Activated T-helper 2 cell treated with anti-CD3 and anti-CD28 coated beads, Interferon-gamma antibody, Interleukin-2, Interleukin-4, amounts not matched to agents 10 μg/mL and 5 μg/mL and 100 μg/mL, durations not matched to agents 14 hours and 24 hours and 36 hours (primary cell): ENCODE measurements at regions of chr14 and their contacts with region 1.

Region 1: GRCh38 chr14:21014761-21015190 is 10.1 kb downstream of the NDRG2 start:
- DNase-seq: peak; percentile 53
- H3K4me3 Mint-ChIP-seq: no peak overlapping the region
- H3K27ac Mint-ChIP-seq: no peak overlapping the region
- H3K4me1 Mint-ChIP-seq: no peaks in the 10 kb centered on the region
- H3K27me3 Mint-ChIP-seq: peaks cover 15% of the 10 kb centered on the region

Region 2: DNA sequence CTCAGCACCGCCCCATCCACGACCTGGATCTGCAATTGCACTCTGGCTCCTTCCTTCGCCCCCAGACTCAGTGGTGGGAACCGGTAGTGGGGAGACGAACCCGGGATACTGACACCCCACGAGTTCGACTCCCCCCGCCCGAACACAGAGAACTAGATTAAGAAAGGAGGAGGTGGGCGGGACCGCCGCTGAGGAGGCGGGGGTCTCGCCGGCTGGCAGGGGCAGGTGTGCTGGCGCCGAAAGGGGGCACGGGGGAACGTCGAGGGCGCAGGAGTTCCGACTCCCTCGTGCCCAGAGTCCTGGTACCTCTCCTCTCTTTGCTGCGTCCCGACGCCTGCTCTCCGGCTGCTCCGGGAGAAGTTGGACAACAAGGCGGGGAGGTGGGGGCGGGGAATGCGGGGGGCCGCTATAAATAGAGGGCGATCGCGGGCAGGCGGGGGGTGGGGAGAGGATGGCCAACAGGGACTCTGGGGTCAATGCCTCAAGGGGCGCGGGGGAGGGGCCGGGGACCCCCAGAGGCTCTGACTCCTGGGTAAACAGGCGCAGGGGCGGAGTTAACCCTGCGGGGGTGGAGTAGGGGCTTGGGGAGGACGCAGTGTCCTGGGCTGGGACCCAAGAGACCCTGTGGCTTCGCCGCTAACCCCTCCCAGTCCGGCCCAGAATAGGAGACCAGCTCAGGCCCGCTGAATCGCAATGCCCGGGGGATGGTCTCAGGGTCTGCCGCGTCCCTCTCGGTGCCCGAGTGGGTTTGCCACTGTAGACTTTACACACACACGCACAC is 10.8 kb after region 1 on chr14:
- intact Hi-C with region 1: loop called (anchors 1 kb)
- DNase-seq: no peak
- H3K4me3 Mint-ChIP-seq: peak overlapping the region; percentile 63
- H3K27ac Mint-ChIP-seq: no peak overlapping the region
- H3K4me1 Mint-ChIP-seq: peaks cover 6% of the 10 kb centered on the region
- H3K27me3 Mint-ChIP-seq: peaks cover 45% of the 10 kb centered on the region

Region 3: DNA sequence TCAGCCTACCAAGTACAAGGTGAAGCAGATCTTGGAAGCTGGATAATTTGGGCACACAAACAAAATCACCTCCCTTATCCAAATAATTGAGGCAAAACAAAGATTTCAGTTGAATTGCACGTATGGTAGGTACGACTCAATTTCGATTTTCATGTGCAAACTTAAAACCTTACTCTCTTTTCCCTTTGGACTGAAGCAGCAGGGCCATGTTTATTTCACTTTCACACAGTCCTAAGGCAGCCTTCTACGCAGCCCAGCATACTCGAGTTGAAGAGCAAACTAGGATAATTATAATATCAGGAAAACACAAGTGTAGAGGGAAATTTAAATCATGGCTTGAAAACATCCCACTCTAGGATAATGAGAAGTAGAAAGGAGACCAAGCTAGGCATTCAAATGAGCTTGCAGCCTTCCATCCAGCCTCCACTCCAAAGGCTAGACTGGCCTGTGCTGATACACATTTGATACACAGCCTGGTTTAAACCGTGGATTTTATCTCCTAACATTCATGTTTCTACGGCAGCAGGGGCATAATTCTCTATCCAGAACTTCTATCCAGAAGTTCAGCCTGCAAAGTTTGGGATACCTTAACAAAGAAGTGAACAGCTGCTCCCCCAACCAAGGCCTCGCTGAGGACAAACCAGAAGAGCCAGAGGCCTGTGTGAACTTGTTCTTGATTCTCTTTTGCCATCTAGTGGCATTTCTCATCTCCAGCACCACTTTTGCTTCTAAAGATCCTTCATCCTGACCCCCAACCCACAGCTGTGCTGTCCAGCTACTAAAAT is 25.0 kb after region 1 on chr14:
- intact Hi-C with region 1: loop called (anchors 1 kb)
- DNase-seq: no peak
- H3K4me3 Mint-ChIP-seq: no peak overlapping the region
- H3K27ac Mint-ChIP-seq: no peak overlapping the region
- H3K4me1 Mint-ChIP-seq: peaks cover 2% of the 10 kb centered on the region
- H3K27me3 Mint-ChIP-seq: peaks cover 20% of the 10 kb centered on the region

Region 4: GRCh38 chr14:21092273-21093011 is 77.7 kb after region 1 on chr14:
- intact Hi-C with region 1: loop called (anchors 1 kb)
- DNase-seq: peak; percentile 83
- H3K4me3 Mint-ChIP-seq: no peak overlapping the region
- H3K27ac Mint-ChIP-seq: no peak overlapping the region
- H3K4me1 Mint-ChIP-seq: peaks cover 11% of the 10 kb centered on the region
- H3K27me3 Mint-ChIP-seq: peaks cover 11% of the 10 kb centered on the region